Dorsolateral prefrontal cortex (tissue), 120 donors: ENCODE measurements at regions of chr11 and their contacts with region 1.

Region 1: GRCh38 chr11:70467201-70468085 is 69.1 kb downstream of the CTTN start:
- DNase-seq: peak; percentile 61 to 74 (median 72)
- H3K4me3 ChIP-seq: peak overlapping the region in 2 of 59 donors; percentile 3 to 7
- H3K27ac ChIP-seq: peak overlapping the region in 2 of 59 donors; percentile 4 to 44
- H3K27me3 ChIP-seq: no peaks in the 10 kb centered on the region
- CTCF ChIP-seq: peak; percentile 78 to 99 (median 92)

Region 2: DNA sequence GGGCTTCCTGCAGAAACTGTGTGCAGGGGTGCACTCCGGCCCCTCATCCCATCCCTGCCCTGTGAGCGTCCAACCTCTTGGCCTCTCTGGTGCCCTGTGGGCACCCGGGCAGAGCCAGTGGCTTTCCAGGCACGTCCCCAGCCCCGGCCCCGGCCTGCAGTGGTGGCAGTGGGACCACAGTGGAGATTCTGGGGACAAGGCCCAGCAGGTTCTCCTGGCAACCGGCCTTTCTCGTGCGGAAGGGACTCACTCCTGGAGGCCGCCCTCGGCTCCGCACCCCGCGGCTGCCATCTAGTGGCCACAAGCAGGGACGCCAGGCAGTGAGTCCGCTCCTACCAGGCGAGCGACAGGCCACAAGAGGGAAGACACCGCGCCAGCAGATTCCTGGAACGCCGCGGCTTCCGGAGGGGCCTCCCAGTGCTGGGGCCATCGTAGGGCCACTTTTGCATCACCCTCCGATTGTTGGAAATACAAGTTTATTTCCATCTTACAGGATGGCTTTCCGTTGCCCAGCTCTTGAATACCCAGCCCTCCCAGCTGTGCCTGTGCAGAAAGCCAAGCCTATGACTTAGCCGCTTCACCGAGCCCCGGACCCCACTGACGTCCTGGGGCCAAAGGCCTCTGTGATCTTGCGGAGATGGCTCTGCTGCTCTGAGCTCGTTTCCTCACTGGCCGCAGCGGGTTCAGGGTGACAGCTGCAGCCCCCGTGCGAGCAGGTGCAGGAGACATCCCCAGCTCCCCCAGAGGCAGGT is 288.1 kb after region 1 on chr11:
- intact Hi-C with region 1: loop called (anchors 1 to 2 kb)
- DNase-seq: peak; percentile 71 to 89 (median 84)
- H3K4me3 ChIP-seq: peak overlapping the region in 26 of 59 donors; percentile 3 to 40 (median 20)
- H3K27ac ChIP-seq: peak overlapping the region in 1 of 59 donors; percentile 14
- H3K27me3 ChIP-seq: peaks cover 0 to 3% (median 0%) of the 10 kb centered on the region in 45 donors
- CTCF ChIP-seq: peak; percentile 68 to 99 (median 97)